Activated CD4-positive, alpha-beta T cell treated with anti-CD3 and anti-CD28 coated beads, Interleukin-2, amount 10 ng/mL, durations not matched to agents 24 days and 14 days (primary cell): ENCODE measurements at regions of chr3 and their contacts with region 1.

Region 1: GRCh38 chr3:153043729-153044328 is 118.2 kb upstream of the RAP2B start:
- DNase-seq: no peak
- H3K4me3 Mint-ChIP-seq: no peak overlapping the region
- H3K27ac Mint-ChIP-seq: no peak overlapping the region
- H3K4me1 Mint-ChIP-seq: peaks cover 6% of the 10 kb centered on the region
- H3K27me3 Mint-ChIP-seq: no peaks in the 10 kb centered on the region

Region 2: DNA sequence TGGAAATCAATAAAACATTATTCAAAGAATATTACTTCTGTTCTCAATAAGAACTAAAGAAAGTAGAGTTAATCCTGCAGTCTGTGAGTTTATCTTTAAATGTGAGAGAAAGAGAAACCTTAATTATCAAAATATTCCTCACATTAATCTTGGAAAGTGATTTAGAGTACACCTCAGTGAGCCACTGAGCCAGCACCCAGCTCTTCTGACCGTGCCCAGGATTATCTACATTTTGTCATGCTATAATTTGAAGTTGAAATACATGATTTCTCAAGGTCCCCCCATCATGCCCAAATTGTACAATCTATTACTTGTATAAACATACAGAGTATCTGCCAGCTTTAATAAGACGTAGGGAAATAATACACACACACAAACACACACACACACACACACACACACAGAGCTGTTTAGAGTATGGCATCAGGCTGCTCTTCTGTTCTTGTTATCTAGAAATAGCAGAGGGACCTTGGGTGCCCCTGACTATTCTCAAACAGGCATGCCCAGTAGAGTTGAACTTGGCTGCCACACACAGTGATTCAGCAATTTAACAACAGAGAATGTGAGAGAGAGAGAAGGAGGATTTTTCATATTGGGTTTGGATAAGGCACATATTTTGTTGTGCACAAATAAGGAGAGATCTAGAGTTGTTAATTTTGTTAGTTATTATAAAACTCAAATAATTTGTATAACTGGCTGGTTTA is 134.5 kb before region 1 on chr3:
- intact Hi-C with region 1: no loop called
- DNase-seq: no peak
- H3K4me3 Mint-ChIP-seq: no peak overlapping the region
- H3K27ac Mint-ChIP-seq: no peak overlapping the region
- H3K4me1 Mint-ChIP-seq: no peaks in the 10 kb centered on the region
- H3K27me3 Mint-ChIP-seq: no peaks in the 10 kb centered on the region

Region 3: GRCh38 chr3:153138276-153139210 is 94.7 kb after region 1 on chr3:
- intact Hi-C with region 1: loop called (anchors 10 kb)
- DNase-seq: peak; percentile 80
- H3K4me3 Mint-ChIP-seq: peak overlapping the region; percentile 25
- H3K27ac Mint-ChIP-seq: peak overlapping the region; percentile 76
- H3K4me1 Mint-ChIP-seq: peaks cover 24% of the 10 kb centered on the region
- H3K27me3 Mint-ChIP-seq: peaks cover 3% of the 10 kb centered on the region

Region 4: DNA sequence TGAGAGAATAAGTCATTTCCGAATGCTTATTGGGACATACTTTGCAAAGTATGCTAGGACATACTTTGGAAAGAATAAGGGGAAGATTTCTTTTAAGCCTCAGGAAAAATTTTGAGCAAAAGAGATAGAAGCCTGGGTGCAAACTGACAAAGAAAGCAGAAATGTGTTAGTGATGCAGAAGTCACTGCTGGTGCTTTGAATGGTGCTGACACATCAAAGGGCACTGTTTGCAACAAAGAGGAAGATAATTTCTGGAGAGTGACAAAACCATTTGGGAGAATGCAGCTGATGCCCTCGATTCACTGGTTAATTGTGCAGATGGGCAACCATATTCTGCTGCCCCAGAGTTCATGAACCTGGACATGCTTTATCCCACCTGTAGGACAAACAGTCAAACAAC is 107.2 kb after region 1 on chr3:
- intact Hi-C with region 1: no loop called
- DNase-seq: no peak
- H3K4me3 Mint-ChIP-seq: no peak overlapping the region
- H3K27ac Mint-ChIP-seq: no peak overlapping the region
- H3K4me1 Mint-ChIP-seq: peaks cover 5% of the 10 kb centered on the region
- H3K27me3 Mint-ChIP-seq: no peaks in the 10 kb centered on the region

Region 5: DNA sequence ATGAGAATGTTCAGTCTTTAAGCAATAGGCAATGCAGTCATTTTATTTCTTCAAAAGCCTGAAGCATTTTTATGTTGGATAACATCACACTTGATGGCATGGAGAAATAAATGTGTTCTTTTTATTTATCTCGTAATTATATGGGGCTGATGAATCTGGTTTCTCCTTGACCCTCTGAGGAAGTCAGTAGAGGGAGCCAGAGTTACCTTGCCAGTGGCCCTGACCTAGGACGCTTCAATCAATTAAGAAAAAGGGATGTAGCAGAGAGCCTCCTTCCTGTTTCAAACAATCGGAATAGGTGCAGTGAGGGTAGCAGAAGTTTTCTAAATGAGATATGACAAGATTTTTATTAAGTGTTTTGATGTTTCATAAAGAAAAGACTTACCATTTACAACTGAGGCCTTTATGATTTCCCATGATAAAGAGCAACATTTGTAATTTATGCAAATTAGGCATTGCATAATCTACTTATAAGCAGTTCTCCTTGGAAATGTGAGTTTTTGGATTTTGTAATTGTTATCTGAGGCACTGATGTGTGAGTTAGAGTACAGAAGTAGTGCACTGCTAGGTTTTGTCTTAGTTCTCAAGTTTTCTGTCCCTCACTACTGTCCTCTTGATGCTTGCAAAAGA is 247.3 kb after region 1 on chr3:
- intact Hi-C with region 1: loop called (anchors 2 kb)
- DNase-seq: peak; percentile 62
- H3K4me3 Mint-ChIP-seq: no peak overlapping the region
- H3K27ac Mint-ChIP-seq: no peak overlapping the region
- H3K4me1 Mint-ChIP-seq: peaks cover 29% of the 10 kb centered on the region
- H3K27me3 Mint-ChIP-seq: no peaks in the 10 kb centered on the region

Region 6: DNA sequence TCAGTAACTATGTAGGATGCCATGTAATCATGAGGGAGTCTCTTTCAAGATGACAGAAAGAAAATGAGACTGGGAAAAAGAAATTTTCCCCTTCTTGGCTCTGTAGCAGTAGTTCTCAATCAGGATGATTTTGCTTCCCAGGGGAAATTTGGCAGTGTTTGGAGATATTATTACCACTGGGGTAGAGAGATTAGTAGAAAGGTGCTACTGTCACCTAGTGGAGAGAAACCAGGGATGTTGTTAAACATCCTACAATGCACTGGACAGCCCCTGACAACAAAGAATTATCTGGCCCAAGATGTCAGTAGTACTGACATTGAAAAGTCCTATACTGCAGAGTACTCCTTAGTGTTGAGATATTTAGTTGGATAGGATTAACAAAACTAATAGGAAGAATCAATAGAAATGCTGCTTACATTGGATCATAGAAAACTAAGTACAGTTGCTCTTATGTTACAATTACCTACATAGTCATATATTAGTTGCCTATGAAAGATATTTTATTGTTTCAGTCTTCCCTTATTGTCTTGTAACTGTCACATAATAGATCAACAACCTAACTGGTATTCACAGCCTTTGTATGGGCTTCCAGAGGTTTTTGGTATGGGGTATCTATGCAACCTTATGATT is 551.5 kb after region 1 on chr3:
- intact Hi-C with region 1: loop called (anchors 2 kb)
- DNase-seq: no peak
- H3K4me3 Mint-ChIP-seq: no peak overlapping the region
- H3K27ac Mint-ChIP-seq: no peak overlapping the region
- H3K4me1 Mint-ChIP-seq: peaks cover 5% of the 10 kb centered on the region
- H3K27me3 Mint-ChIP-seq: no peaks in the 10 kb centered on the region

Region 7: GRCh38 chr3:153768561-153769469 is 725.0 kb after region 1 on chr3:
- intact Hi-C with region 1: loop called (anchors 1 kb)
- DNase-seq: peak; percentile 84
- H3K4me3 Mint-ChIP-seq: no peak overlapping the region
- H3K27ac Mint-ChIP-seq: no peak overlapping the region
- H3K4me1 Mint-ChIP-seq: peaks cover 4% of the 10 kb centered on the region
- H3K27me3 Mint-ChIP-seq: peaks cover 19% of the 10 kb centered on the region

Region 8: GRCh38 chr3:154018100-154018696 is 974.4 kb after region 1 on chr3:
- intact Hi-C with region 1: loop called (anchors 5 kb)
- DNase-seq: peak; percentile 71
- H3K4me3 Mint-ChIP-seq: no peak overlapping the region
- H3K27ac Mint-ChIP-seq: no peak overlapping the region
- H3K4me1 Mint-ChIP-seq: no peaks in the 10 kb centered on the region
- H3K27me3 Mint-ChIP-seq: no peaks in the 10 kb centered on the region